CD4-positive, alpha-beta memory T cell (primary cell): ENCODE measurements at regions of chr5 and their contacts with region 1.

Region 1: GRCh38 chr5:6712577-6713275 is 506 bp upstream of the TENT4A start:
- DNase-seq: peak; percentile 96 to 99 (median 99)
- H3K4me3 ChIP-seq: peak overlapping the region; percentile 70 to 81
- H3K4me3 Mint-ChIP-seq: peak overlapping the region; percentile 88 to 91 (median 90)
- H3K27ac ChIP-seq: peak overlapping the region; percentile 86
- H3K27ac Mint-ChIP-seq: peak overlapping the region; percentile 92 to 95 (median 94)
- H3K4me1 ChIP-seq: peaks cover 31% of the 10 kb centered on the region
- H3K4me1 Mint-ChIP-seq: peaks cover 26 to 39% (median 33%) of the 10 kb centered on the region in 4 donors
- H3K27me3 ChIP-seq: no peaks in the 10 kb centered on the region
- H3K27me3 Mint-ChIP-seq: no peaks in the 10 kb centered on the region

Region 2: DNA sequence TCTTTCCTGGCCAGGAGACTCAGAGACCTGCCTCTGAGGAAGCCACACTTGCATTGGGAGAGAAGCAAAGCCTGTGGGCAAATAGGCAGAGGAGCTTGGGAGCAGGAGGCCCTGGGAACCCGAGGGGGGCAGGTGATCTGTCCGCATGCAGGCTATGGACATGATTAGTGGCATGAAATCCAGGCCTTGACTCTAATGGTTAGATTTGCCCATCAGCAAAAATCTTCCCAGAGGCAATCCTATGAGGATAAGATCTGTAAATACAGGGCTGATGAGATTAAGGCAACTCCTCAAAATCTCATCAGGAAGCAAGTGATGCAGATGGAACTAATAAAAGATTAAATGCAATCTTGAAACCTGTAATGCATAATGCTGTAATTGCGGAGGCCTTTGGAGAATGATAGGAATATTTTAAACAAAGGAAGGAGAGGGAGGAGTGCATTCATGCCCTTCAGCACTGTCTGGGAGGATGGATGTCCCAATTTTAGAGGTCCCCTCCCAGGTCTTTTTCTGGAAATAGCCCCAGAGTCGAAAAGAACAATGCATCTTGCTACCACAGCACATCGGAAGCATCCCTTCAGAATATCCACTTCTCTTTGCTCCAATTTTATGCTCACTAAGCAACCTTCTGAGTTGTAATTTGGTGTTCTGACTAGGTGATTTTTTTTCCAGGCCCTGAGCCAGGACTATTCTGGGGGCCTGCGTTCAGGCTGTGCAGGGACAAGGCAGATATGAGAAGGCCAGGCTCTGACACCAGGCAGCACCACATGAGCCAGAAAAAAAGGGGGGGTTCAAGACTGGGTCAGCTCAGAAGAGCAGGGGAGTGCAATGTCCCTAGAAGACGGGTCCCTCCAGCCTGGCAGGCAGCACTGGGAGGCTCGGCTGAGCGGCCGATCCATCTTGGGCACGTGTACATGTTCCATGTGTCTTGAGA is 400.9 kb before region 1 on chr5:
- CTCF ChIA-PET with region 1: no interaction called
- POLR2A ChIA-PET with region 1: no interaction called
- intact Hi-C with region 1: no loop called
- DNase-seq: no peak
- H3K4me3 ChIP-seq: no peak overlapping the region
- H3K4me3 Mint-ChIP-seq: no peak overlapping the region
- H3K27ac ChIP-seq: no peak overlapping the region
- H3K27ac Mint-ChIP-seq: no peak overlapping the region
- H3K4me1 ChIP-seq: no peaks in the 10 kb centered on the region
- H3K4me1 Mint-ChIP-seq: peaks cover 0 to 5% (median under 1%) of the 10 kb centered on the region in 4 donors
- H3K27me3 ChIP-seq: no peaks in the 10 kb centered on the region
- H3K27me3 Mint-ChIP-seq: peaks cover 0 to 3% of the 10 kb centered on the region in 2 donors

Region 3: DNA sequence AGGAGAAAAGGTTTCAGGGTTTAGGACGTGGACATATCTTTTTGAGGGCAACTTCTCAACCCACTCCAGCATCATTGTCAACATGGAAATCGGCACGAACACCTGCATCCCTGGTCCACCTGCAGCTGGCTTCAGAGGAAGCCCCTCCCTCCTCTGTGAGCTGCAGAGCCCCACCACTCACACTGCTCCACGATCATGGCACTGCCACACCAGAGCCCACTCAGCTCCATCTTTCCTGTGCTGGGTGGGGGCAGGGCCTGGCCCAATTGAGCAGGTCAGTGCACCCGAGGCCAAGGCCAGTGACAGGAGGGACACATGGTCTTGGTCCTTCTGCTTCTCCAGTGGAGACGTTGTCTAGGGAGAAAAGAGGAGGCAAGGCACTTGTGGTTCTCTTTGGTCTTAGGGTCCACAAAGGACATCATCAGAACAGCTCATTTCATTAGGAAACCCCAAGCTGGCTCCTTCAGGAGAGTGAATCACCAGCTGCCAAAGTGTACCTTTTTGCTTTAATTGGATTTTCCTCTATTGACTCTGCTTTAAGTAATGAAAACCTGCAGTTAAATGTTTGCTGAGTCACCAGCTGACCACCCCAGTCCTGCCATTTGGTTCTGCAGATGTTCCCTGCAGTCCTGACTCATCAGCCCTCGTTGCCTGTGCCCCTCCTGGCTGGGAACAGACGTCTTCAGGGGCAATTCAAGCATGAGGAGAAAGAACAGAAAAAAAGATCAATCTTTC is 207.9 kb before region 1 on chr5:
- CTCF ChIA-PET with region 1: no interaction called
- POLR2A ChIA-PET with region 1: no interaction called
- intact Hi-C with region 1: no loop called
- DNase-seq: no peak
- H3K4me3 ChIP-seq: no peak overlapping the region
- H3K4me3 Mint-ChIP-seq: no peak overlapping the region
- H3K27ac ChIP-seq: no peak overlapping the region
- H3K27ac Mint-ChIP-seq: no peak overlapping the region
- H3K4me1 ChIP-seq: no peaks in the 10 kb centered on the region
- H3K4me1 Mint-ChIP-seq: no peaks in the 10 kb centered on the region
- H3K27me3 ChIP-seq: no peaks in the 10 kb centered on the region
- H3K27me3 Mint-ChIP-seq: peaks cover 12 to 28% of the 10 kb centered on the region in 2 donors

Region 4: DNA sequence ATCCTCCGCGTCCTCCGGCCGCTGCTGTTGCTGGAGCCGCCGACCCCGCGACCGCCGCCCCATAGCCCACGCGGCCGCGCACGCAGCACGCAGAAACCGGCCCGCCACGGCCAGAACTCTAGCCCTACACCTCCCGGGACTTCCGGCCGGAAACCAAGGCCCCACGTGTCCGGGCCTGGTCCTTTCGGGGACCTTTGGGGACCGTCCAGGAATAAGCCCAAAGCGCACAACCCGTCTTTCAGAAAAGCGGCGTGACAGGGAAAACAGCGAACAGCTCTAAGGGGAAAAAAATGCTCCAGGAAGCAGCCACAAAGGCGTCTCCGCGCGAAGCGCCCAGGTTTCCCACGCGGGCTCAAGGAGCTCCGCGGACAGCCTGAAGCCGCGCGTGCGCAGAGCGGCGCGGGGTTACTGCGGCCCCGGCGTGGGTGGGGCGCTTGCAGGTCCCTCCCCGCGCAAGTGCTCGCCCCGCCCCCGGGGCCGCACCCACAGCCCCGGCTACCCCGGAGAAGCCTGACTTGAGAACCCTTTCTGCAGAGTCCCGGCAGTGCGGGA is 79.7 kb before region 1 on chr5 and contains the starts of genes NSUN2 and SRD5A1:
- CTCF ChIA-PET with region 1: interaction called, 4 read pairs
- POLR2A ChIA-PET with region 1: interaction called, 29 read pairs
- intact Hi-C with region 1: loop called (anchors 1 kb)
- DNase-seq: peak; percentile 92 to 98 (median 95)
- H3K4me3 ChIP-seq: peak within 1 kb of the TSS; percentile 66 to 94
- H3K4me3 Mint-ChIP-seq: peak within 1 kb of the TSS; percentile 84 to 99 (median 93)
- H3K27ac ChIP-seq: peak within 1 kb of the TSS; percentile 87
- H3K27ac Mint-ChIP-seq: peak within 1 kb of the TSS; percentile 92 to 99 (median 99)
- H3K4me1 ChIP-seq: peaks cover 36% of the 10 kb centered on the region
- H3K4me1 Mint-ChIP-seq: peaks cover 30 to 60% (median 39%) of the 10 kb centered on the region in 4 donors
- H3K27me3 ChIP-seq: no peaks in the 10 kb centered on the region
- H3K27me3 Mint-ChIP-seq: no peaks in the 10 kb centered on the region
- total RNA-seq, gene NSUN2: 78.0 to 81.6 TPM
- total RNA-seq, gene SRD5A1: 7.8 to 9.2 TPM

Region 5: DNA sequence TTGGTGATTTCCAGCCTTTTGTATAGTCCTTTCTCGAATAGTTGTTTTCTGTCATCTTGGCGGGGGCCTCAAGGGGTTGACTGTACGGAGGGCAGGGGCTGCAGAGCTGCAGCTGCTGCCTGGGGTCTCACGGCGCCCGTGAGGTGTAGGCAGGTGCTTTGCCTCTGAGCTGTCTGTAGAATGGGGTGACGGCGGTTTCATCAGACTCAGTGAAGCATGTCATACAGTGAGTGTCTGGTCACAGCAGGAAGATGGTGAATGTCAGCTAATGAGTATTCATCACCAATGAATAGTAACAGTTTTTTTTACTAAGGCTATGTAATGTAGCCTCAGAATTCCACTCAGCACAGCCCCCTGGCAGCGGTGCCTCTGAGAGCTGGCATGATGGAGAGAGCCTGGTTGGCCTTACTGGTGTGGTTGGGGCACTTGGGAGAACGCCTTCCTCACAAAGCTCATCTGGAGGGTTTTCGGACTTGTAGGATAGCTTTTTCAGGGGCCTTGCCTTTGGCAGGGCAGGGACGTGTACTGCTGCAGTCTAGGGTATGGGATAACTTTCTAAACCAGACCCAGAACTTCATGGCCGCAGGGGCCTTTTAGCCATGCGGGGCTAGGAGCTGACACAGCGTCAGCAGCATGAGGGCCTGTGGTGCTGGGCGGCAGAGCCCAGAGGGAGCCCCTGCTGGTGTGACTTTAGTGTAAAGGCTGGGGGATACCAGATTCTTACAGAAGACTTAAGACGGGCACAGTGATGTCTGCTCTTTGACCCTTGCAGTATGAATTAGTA is 15.5 kb after region 1 on chr5:
- CTCF ChIA-PET with region 1: interaction called, 7 read pairs
- POLR2A ChIA-PET with region 1: interaction called, 11 read pairs
- intact Hi-C with region 1: loop called (anchors 1 kb)
- DNase-seq: no peak
- H3K4me3 ChIP-seq: no peak overlapping the region
- H3K4me3 Mint-ChIP-seq: peak overlapping the region in 4 of 8 donors; percentile 6 to 73 (median 45)
- H3K27ac ChIP-seq: no peak overlapping the region
- H3K27ac Mint-ChIP-seq: peak overlapping the region in 6 of 7 donors; percentile 63 to 87 (median 68)
- H3K4me1 ChIP-seq: peaks cover 66% of the 10 kb centered on the region
- H3K4me1 Mint-ChIP-seq: peaks cover 66 to 97% (median 85%) of the 10 kb centered on the region in 4 donors
- H3K27me3 ChIP-seq: no peaks in the 10 kb centered on the region
- H3K27me3 Mint-ChIP-seq: no peaks in the 10 kb centered on the region